Activated CD4-positive, alpha-beta T cell treated with anti-CD3 and anti-CD28 coated beads, Interleukin-2, amount 10 ng/mL, durations not matched to agents 24 days and 14 days (primary cell): ENCODE measurements at regions of chr3 and their contacts with region 1.

Region 1: GRCh38 chr3:15753056-15753710 is 44.6 kb downstream of the ANKRD28 start:
- DNase-seq: no peak
- H3K4me3 Mint-ChIP-seq: no peak overlapping the region
- H3K27ac Mint-ChIP-seq: no peak overlapping the region
- H3K4me1 Mint-ChIP-seq: peaks cover 8% of the 10 kb centered on the region
- H3K27me3 Mint-ChIP-seq: no peaks in the 10 kb centered on the region

Region 2: DNA sequence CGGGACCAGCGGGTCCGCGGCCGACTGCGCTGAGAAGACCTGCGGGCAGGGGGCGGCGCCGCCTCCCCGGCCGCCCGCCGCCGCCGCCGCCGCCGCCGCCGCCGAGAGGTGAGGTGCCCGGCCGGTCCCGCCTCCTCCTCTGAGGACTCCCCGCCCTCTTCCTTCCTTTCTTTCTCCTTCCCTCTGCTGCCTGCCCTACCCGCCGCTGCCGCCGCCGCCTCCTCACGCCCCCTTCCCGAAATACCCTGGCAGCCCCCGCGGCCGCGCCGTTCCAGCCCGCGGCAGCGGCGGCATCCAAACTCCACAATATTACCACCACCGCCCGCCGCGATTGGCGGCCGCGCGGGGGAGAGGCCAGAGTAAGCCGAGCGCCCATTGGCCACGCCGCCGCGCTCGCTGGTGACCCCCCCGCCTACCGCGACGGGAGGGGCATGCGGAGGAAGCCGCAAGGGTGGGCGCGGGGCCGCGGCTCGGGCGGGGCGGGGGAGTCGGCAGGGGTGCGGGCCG is 106.4 kb after region 1 on chr3:
- intact Hi-C with region 1: loop called (anchors 5 kb)
- DNase-seq: peak; percentile 94
- H3K4me3 Mint-ChIP-seq: peak overlapping the region; percentile 92
- H3K27ac Mint-ChIP-seq: peak overlapping the region; percentile 96
- H3K4me1 Mint-ChIP-seq: peaks cover 25% of the 10 kb centered on the region
- H3K27me3 Mint-ChIP-seq: peaks cover 9% of the 10 kb centered on the region